AG04449 (cell line): ENCODE measurements at regions of chr2 and their contacts with region 1.

Region 1: DNA sequence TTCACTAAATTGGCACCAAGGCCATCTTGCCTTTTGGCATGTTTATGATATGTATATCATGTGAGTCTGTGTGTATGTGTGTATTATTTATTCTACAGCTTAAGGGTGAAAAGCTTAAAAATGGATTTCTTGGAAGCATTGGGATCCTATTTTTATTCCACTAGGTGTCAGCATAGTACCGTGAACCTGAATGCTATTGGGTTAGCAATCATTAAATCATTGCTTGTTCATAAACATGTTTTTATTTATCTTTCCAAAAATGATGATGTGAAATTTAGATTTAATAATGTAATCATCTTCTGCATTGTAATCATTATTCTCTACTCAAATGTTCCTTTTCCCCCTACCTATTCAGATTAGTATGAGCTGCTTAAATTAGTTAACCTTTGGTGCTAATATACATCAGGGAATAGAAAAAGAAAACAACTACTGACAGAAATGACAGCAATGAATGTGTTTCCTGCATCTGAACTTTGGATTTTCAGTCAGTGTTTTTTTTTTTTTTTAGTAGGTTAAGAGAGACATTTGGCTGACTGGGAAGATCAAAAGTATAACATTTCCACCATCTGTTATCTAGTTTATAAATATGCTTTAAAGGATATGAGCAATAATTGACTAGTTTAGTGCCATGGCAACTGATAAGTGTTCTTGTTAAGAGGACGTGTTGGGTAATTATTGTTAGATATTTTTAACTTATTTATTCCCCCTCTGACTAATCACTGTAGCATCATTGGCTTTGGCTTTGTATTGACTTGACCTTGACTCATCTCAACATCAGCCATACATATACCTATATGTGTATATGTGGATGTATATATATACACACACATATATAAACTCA is 14.1 kb upstream of the ZSWIM2 start:
- DNase-seq: no peak
- H3K4me3 ChIP-seq: no peak overlapping the region
- CTCF ChIP-seq: peak; percentile 28

Region 2: GRCh38 chr2:186422226-186422625 is 440.9 kb before region 1 on chr2:
- CTCF ChIA-PET with region 1: no interaction called
- POLR2A ChIA-PET with region 1: no interaction called
- DNase-seq: peak; percentile 38
- H3K4me3 ChIP-seq: no peak overlapping the region
- CTCF ChIP-seq: no peak

Region 3: GRCh38 chr2:187447336-187447735 is 584.2 kb after region 1 on chr2:
- CTCF ChIA-PET with region 1: interaction called, 31 read pairs
- POLR2A ChIA-PET with region 1: no interaction called
- DNase-seq: no peak
- H3K4me3 ChIP-seq: no peak overlapping the region
- CTCF ChIP-seq: no peak

Region 4: DNA sequence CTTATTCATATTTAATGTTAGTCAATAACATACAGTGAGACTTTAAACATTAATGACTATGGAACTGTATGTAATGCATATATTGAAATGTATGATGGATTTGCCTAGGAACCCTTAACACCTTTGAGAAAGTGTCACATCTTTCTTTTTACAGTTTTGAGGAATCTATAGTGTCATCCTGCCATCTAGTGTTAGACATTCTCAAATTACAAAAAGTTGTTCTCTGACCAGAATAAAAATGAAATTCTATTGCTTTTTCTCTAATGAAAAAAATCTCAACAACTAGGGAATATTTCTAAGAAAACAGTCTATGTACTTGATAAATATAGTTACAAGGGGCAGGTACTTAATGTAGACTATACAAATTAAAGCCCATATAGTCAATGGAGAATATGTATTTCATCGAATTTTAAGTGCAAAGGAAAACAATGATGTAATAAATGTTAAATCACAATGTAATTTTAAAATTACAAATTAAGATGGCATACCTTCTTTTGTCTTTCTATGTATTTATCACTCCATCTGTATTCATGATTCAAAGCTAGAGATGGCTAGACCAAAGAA is 590.1 kb after region 1 on chr2:
- CTCF ChIA-PET with region 1: interaction called, 31 read pairs
- POLR2A ChIA-PET with region 1: no interaction called
- DNase-seq: no peak
- H3K4me3 ChIP-seq: no peak overlapping the region
- CTCF ChIP-seq: peak; percentile 17

Region 5: DNA sequence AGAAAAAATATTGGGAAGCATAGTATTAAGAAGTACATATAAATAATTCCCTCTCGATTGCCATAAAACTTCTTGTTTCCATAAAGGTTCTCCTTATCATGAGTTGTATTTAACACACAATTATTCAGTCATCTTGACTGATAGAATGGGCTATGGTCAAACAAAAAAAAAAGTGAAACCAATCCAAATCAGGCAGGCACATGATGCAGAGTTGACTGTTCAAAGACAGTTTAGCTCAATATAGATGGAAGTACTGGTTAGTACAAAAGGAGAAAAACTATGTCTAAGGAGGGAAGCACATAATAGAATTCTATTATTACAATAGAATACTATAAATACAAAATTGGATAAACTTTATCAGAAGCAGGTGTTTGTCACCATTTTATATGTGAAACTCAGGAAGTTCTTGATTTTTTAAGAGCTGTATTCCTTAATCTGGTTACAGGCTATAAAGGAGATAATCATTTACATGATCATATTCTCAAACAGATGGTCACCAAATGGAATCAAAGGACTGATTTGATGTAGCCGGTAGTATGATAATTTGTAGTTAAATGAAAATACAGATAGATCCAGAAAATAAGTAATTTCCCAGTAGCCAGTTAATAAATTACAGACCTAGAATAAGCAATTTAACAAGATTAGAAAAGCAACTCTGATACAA is 603.2 kb after region 1 on chr2:
- CTCF ChIA-PET with region 1: no interaction called
- POLR2A ChIA-PET with region 1: no interaction called
- DNase-seq: no peak
- H3K4me3 ChIP-seq: no peak overlapping the region
- CTCF ChIP-seq: no peak